ENCODE measurements at regions of chr11 and their contacts with region 1.

Region 1: DNA sequence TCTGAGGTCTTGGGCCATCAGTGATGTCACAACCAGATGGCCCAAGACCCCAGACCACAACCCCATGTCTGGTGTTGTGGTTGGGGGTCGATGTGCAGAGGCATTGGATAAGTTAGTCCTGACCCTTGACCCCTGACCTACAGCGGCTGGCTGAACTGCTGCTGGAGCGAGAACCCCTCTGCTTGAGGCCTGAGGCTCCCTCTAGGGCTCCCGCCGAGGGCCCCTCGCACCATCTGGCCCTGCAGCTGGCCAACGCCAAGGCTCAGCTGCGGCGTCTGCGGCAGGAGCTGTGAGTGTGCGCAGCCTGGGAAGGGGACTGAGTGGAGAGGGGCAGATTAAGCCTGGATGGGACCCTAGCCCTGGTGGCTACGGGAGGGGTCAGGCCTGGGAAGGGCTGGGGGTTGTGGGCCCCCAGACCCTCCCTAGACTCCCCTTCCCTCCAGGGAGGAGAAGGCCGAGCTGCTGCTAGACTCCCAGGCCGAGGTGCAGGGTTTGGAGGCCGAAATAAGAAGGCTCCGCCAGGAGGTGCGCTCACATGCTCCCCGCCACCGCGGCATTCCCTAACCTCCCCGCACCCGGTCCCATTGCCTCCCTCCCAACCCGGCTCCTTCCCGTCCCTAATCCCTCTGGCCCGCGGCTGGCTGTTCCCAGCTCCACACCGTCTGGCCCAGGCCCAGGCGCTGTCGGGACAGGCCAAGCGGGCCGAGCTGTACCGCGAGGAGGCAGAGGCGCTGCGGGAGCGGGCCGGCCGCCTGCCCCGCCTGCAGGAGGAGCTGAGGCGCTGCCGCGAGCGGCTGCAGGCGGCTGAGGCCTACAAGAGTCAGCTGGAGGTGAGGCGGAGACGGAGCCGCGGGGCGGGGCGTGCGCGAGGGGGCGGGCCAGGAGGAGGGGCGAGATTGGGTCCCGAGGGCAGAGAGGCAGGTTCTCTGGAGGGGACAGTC is 2.1 kb downstream of the CCDC88B start:
- DNase-seq: peak; percentile 63
- ATAC-seq: peak; percentile 84
- H3K4me3 ChIP-seq: peak overlapping the region in 2 of 3 experiments; percentile 46 to 64; a peak in 4 of 6 replicates
- H3K27ac ChIP-seq: no peak overlapping the region
- H3K4me1 ChIP-seq: peaks cover 36% of the 10 kb centered on the region
- H3K27me3 ChIP-seq: peaks cover 3 to 43% of the 10 kb centered on the region in 2 experiments; a peak in 4 of 5 replicates
- CTCF ChIP-seq: peak; percentile 60
- EP300 ChIP-seq: no peak
- POLR2A ChIP-seq: no peak
- RAD21 ChIP-seq: peak; percentile 49; the same call in 1 of the 2 replicates

Region 2: GRCh38 chr11:64358907-64359711 is 17.0 kb after region 1 on chr11 and contains the start of gene RPS6KA4:
- CTCF ChIA-PET with region 1: interaction called, 3 read pairs
- POLR2A ChIA-PET with region 1: interaction called, 10 read pairs
- in situ Hi-C with region 1: no loop called
- intact Hi-C with region 1: no loop called
- DNase-seq: no peak
- ATAC-seq: peak; percentile 78
- H3K4me3 ChIP-seq: peak within 1 kb of the TSS; percentile 80 to 96 (median 94)
- H3K27ac ChIP-seq: peak within 1 kb of the TSS; percentile 59
- H3K4me1 ChIP-seq: peaks cover 48% of the 10 kb centered on the region
- H3K27me3 ChIP-seq: no peaks in the 10 kb centered on the region; a peak in 1 of 5 replicates
- CTCF ChIP-seq: no peak
- EP300 ChIP-seq: no peak
- POLR2A ChIP-seq: no peak; a peak in 1 of 4 replicates
- RAD21 ChIP-seq: peak; percentile 14; the same call in 1 of the 2 replicates
- total RNA-seq, gene RPS6KA4: 8.9 and 14.2 TPM in 2 replicates

Measured in HepG2 (cell line).